Adrenal gland (tissue), 19 donors: ENCODE measurements at regions of chr18 and their contacts with region 1.

Region 1: GRCh38 chr18:37537868-37538525 is 27.6 kb downstream of the CELF4 start:
- DNase-seq: peak; percentile 56 to 92 (median 80)
- H3K4me3 ChIP-seq: no peak overlapping the region
- H3K27ac ChIP-seq: peak overlapping the region in 1 of 5 donors; percentile 31
- H3K4me1 ChIP-seq: no peaks in the 10 kb centered on the region
- H3K27me3 ChIP-seq: peaks cover 11% of the 10 kb centered on the region
- CTCF ChIP-seq: peak; percentile 62 to 88 (median 86)
- POLR2A ChIP-seq: no peak

Region 2: GRCh38 chr18:37341016-37341415 is 197.0 kb before region 1 on chr18:
- intact Hi-C with region 1: loop called in 1 of 2 experiments (anchors 5 kb)
- DNase-seq: no peak
- H3K4me3 ChIP-seq: no peak overlapping the region
- H3K27ac ChIP-seq: no peak overlapping the region
- H3K4me1 ChIP-seq: no peaks in the 10 kb centered on the region
- H3K27me3 ChIP-seq: no peaks in the 10 kb centered on the region
- CTCF ChIP-seq: no peak
- POLR2A ChIP-seq: no peak

Region 3: GRCh38 chr18:37385846-37386778 is 151.9 kb before region 1 on chr18:
- intact Hi-C with region 1: loop called (anchors 2 to 10 kb)
- DNase-seq: no peak
- H3K4me3 ChIP-seq: no peak overlapping the region
- H3K27ac ChIP-seq: no peak overlapping the region
- H3K4me1 ChIP-seq: no peaks in the 10 kb centered on the region
- H3K27me3 ChIP-seq: no peaks in the 10 kb centered on the region
- CTCF ChIP-seq: peak; percentile 58 to 81 (median 76)
- POLR2A ChIP-seq: no peak

Region 4: GRCh38 chr18:37445368-37445767 is 92.6 kb before region 1 on chr18:
- intact Hi-C with region 1: loop called (anchors 5 kb)
- DNase-seq: peak in 6 of 7 donors; percentile 27 to 64 (median 42)
- H3K4me3 ChIP-seq: no peak overlapping the region
- H3K27ac ChIP-seq: no peak overlapping the region
- H3K4me1 ChIP-seq: no peaks in the 10 kb centered on the region
- H3K27me3 ChIP-seq: no peaks in the 10 kb centered on the region
- CTCF ChIP-seq: no peak
- POLR2A ChIP-seq: no peak

Region 5: GRCh38 chr18:37598966-37599896 is 61.2 kb after region 1 on chr18:
- intact Hi-C with region 1: no loop called
- DNase-seq: no peak
- H3K4me3 ChIP-seq: no peak overlapping the region
- H3K27ac ChIP-seq: no peak overlapping the region
- H3K4me1 ChIP-seq: no peaks in the 10 kb centered on the region
- H3K27me3 ChIP-seq: no peaks in the 10 kb centered on the region
- CTCF ChIP-seq: no peak
- POLR2A ChIP-seq: no peak

Region 6: DNA sequence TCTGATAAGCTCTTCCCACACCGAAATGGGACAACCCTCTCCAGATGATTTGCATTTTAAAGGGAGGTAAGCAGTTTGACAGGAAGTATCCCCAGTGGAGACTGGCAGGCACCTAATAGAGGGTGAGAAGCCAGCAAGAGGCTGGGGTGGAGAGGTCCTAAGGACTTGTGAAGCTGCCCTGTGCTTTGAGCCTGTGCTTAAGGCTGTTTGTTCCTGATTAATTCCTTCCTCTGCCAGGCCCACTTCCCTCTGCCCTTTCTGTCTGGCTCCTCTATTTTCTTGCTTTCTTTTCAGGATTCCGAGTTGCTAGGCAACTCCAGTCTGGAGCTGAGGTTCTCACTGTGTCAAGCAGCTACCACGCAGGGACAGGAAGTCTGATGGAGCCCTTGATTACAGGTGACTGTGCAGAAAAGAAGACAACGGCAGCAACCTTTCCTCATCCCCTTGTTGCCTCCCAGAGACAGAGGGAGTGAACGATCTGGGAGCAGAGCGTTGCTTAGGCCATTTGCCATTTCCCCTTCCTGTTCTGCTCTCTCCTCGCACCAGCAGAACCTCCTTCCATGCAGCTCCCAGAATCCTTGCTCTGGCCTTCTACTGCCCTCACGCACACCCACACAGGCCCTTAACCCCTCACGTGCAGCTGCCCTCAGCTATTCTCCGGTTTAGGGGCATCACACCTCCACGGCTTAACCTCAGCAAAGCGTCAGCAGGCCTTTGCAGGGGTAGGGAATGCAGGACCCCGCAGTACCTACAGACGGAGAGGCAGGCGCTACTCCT is 131.2 kb after region 1 on chr18:
- intact Hi-C with region 1: no loop called
- DNase-seq: peak in 1 of 7 donors; percentile 74
- H3K4me3 ChIP-seq: no peak overlapping the region
- H3K27ac ChIP-seq: peak overlapping the region in 1 of 5 donors; percentile 17
- H3K4me1 ChIP-seq: no peaks in the 10 kb centered on the region
- H3K27me3 ChIP-seq: no peaks in the 10 kb centered on the region
- CTCF ChIP-seq: no peak
- POLR2A ChIP-seq: no peak

Region 7: DNA sequence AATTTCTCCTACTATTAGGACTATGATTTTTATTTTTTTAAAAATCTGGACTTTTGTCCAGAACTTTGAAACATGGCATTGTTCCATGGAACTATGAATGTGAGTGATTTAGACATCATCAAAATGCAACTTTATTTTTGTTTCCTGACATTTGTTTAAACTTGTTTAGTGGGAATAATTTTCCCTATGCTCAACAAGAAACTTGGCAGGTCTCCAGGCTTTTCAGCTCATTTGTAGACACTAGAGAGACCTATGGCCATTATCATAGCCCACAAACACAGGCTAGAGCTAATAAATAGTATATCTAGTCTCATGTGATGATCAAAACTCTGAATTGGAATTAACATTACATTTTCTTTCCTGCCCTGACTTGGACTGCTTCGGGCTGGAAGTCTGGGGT is 172.7 kb after region 1 on chr18:
- intact Hi-C with region 1: no loop called
- DNase-seq: no peak
- H3K4me3 ChIP-seq: no peak overlapping the region
- H3K27ac ChIP-seq: no peak overlapping the region
- H3K4me1 ChIP-seq: no peaks in the 10 kb centered on the region
- H3K27me3 ChIP-seq: no peaks in the 10 kb centered on the region
- CTCF ChIP-seq: no peak
- POLR2A ChIP-seq: no peak